Left ventricle myocardium superior (tissue), 1 donor: ENCODE measurements at regions of chr5 and their contacts with region 1.

Region 1: DNA sequence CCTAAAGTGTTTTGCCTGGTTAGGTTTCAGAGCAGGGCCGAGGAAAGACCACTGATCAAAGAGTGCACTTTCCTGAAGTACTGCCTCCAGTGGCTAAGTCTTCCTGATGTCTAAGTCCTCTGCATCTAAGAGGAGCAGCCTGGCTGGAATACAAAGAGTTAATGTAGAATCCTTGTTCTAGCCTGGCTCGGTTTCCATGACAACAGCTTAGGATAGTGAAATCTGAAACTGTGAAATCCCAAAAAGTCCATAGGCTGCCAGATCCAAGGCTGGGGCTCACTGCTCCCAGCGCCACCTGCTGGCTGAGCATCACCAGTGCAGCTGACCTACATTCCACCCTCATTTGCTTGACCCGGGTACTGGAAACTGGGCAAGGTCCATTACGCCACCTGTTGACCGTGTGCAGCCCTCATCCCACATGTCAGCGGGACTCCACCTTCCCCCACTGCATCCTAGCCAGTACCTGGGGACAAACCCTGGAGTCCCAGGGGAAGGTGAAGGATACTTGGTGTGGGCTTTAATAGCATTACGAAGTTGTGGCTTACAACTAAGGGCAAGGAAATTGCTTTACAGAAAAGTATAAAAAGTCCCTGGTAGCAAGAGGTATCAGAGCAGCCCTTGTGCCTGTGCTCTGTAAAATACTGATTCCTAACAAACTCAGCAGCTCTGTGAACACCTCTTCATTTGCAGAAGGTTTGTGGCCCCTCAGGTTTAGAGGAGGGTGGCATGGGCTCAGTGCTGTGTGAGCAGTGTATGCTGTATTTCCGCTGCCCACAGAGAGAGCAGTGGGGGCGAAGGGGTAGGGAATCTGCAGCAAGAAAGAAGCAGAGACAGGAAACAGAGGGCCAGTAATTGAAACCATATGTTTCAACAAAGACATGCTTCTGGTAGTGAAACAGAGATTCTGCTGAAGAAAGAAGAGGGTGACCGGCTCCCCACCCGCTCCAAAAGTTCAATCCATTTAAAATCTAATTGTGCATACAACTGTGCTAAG is 36.0 kb downstream of the PCDHGC5 start:
- DNase-seq: peak; percentile 88
- ATAC-seq: peak; percentile 65

Region 2: DNA sequence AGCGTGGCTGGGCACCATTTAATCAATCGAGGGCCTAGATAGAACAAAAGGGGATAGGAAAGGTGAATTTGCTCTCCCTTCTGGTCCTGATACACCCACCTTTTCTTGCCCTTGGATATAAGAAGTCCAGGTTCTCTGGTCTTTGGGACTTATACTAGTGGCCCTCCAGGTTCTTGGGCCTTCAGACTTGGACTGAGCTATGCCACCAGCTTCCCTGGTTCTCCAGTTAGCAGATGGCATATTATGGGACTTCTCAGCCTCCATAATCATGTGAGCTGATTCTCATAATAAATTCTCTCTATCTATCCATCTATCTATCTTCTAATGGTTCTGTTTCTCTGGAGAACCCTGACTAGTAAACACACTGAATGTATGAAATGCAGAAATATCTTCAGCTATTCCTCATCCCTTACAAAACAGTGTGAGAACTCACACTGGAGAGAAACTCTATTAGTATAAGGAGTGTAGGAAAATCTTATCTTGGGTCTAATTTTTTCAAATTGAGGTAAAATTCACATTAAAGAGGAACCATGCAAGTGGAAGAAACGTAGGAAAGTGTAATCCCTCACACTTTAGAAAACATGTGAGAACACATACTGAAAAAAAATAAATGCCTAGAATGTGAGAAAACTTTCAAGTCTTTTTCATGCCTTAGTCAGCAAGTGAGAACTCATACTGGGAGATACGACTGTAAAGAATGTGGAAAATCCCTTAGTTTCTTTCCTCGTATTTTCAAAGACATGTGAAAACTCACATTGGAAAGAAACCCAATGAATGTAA is 264.3 kb before region 1 on chr5:
- intact Hi-C with region 1: no loop called
- DNase-seq: no peak
- ATAC-seq: no peak

Region 3: DNA sequence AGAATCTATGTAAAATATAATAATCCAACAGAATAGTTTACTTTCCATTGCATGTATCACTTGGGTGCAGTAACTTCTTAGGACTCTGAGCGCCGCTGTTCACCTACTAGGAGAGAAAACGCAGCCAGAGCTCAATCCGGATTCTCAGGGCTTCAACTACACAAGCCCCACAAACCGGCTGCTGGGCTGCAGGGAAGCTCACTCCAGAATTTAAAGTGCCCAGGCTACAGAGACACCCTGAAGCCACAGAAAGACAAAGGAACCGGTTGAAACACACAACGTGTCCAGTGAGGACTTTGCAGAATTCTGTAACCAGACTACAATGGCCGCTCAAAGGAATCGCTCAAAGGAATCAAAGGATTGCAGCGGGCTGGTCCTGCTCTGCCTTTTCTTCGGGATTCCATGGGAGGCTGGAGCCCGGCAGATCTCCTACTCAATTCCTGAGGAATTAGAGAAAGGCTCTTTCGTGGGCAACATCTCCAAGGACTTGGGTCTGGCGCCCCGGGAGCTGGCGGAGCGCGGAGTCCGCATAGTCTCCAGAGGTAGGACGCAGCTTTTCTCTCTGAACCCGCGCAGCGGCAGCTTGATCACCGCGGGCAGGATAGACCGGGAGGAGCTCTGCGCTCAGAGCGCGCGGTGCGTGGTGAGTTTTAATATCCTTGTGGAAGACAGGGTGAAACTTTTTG is 111.9 kb before region 1 on chr5 and contains the start of gene PCDHGA10:
- intact Hi-C with region 1: loop called (anchors 10 kb)
- DNase-seq: peak; percentile 44
- ATAC-seq: peak; percentile 67
- total RNA-seq, gene PCDHGA10: 5.3 TPM

Region 4: GRCh38 chr5:141465351-141465750 is 59.5 kb before region 1 on chr5:
- intact Hi-C with region 1: no loop called
- DNase-seq: no peak
- ATAC-seq: no peak

Region 5: DNA sequence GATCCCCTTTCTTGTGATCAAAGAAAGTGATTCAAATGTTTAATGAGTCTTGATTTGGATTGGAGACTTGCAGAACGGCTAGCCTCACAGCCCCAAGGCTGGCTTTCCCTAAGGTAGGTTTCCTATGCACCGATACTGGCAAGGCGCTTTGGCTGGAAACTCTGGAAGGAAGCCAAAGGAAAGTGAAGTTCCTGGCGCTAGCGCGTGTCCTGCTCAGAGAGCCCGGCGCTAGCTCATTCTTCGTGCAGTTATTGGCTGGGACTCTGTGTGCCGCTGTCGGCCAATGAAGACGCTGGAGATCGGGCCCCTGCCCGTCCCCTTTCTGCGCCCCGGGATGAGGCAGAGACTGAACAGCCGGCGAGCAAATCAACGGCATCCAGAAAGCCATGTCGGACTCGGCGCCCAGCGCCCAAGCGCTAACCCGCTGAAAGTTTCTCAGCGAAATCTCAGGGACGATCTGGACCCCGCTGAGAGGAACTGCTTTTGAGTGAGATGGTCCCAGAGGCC is 49.2 kb before region 1 on chr5 and contains the start of gene PCDHGC3:
- intact Hi-C with region 1: loop called (anchors 5 kb)
- DNase-seq: peak; percentile 94
- ATAC-seq: peak; percentile 98
- total RNA-seq, gene PCDHGC3: 13.4 TPM

Region 6: DNA sequence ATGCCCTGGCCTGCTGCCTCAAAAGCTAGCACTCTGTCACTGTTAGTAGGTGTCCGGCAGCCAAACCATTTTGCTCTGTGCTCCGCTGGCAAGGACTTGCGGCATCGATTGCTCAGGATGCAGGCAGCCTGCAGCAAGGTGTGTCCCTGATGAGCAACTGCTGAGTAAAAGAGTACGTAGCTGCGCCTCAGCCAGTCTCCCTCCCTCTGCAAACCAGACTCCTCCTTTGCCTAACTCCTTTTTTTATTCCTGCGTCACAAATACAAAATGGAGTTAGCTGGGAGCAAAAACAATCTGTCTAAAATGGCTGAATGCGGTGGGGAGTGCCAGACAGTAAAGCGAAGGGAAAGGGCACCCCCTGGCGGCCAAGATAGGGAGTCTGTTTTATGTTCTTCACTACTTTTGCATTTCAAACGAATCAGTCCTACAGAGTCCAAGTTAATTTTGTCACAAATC is 32.8 kb after region 1 on chr5:
- intact Hi-C with region 1: loop called (anchors 5 kb)
- DNase-seq: peak; percentile 88
- ATAC-seq: peak; percentile 73

Region 7: DNA sequence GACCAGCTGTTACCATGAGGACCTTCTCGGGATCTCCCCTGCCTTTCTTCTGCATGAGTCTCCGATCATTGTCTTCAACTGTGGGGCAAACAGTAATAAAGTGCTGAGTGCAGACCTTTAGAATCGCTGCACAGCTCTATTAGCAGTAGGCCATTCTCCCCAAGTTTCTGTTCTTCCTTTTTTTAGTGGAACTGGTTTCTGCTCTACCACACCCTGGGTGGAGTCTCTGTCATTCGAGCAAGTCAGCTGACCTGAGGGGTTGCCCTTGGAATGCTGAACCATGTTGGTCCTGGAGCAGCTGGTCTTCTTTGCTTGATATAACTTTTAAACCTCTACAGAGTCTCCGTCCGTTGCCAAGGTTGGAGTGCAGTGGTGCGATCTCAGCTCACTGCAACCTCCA is 521.3 kb after region 1 on chr5:
- intact Hi-C with region 1: no loop called
- DNase-seq: no peak
- ATAC-seq: peak; percentile 80